CD8-positive, alpha-beta T cell (primary cell): ENCODE measurements at regions of chr7 and their contacts with region 1.

Region 1: DNA sequence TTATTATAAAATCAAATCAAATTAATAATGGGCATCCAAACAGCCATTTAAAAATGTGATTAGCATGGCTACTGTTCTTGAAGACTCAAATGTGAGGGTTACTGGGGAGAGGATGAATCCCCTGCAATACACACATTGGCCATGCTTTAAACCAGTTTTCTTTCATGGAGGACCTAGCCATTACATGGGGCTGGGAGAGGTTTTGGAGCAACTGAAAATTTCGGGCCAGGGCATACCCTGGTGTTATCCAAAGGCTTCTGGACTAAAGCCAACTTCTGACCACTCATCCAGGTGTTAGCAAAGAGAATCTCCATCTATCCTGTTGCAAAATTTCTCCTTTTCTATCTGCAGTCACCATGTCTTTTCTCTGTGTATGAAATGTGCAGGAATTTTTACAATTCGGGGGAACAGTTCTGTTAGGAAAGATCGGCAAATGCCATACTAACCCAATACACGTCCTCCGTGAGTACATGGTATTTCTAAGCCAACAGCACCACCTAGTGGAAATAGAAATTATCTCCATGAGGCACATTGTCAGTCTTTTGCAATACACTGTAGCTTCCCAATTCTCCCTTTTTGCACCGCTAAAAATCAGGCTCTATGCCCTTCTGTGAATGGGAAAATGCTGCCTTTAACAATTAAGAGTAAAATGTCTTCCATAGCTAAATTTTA is 47.0 kb upstream of the ZNF107 start:
- DNase-seq: peak in 3 of 9 experiments; percentile 23 to 70 (median 61)
- ATAC-seq: no peak
- H3K4me3 ChIP-seq: no peak overlapping the region
- H3K4me3 Mint-ChIP-seq: no peak overlapping the region
- H3K27ac ChIP-seq: no peak overlapping the region
- H3K27ac Mint-ChIP-seq: no peak overlapping the region
- H3K4me1 ChIP-seq: no peaks in the 10 kb centered on the region
- H3K4me1 Mint-ChIP-seq: peaks cover 2% of the 10 kb centered on the region
- H3K27me3 ChIP-seq: no peaks in the 10 kb centered on the region
- H3K27me3 Mint-ChIP-seq: no peaks in the 10 kb centered on the region
- CTCF ChIP-seq: peak; percentile 71

Region 2: GRCh38 chr7:63008366-63008765 is 1610.6 kb before region 1 on chr7:
- CTCF ChIA-PET with region 1: no interaction called
- POLR2A ChIA-PET with region 1: no interaction called
- intact Hi-C with region 1: loop called (anchors 5 kb)
- DNase-seq: no peak
- ATAC-seq: no peak
- H3K4me3 ChIP-seq: no peak overlapping the region
- H3K4me3 Mint-ChIP-seq: no peak overlapping the region
- H3K27ac ChIP-seq: no peak overlapping the region
- H3K27ac Mint-ChIP-seq: no peak overlapping the region
- H3K4me1 ChIP-seq: no peaks in the 10 kb centered on the region
- H3K4me1 Mint-ChIP-seq: no peaks in the 10 kb centered on the region
- H3K27me3 ChIP-seq: no peaks in the 10 kb centered on the region
- H3K27me3 Mint-ChIP-seq: no peaks in the 10 kb centered on the region
- CTCF ChIP-seq: no peak

Region 3: GRCh38 chr7:64183126-64183742 is 435.7 kb before region 1 on chr7:
- CTCF ChIA-PET with region 1: interaction called, 23 read pairs
- POLR2A ChIA-PET with region 1: no interaction called
- intact Hi-C with region 1: loop called in 1 of 2 experiments (anchors 2 kb)
- DNase-seq: peak in 7 of 9 experiments; percentile 11 to 62 (median 45)
- ATAC-seq: no peak
- H3K4me3 ChIP-seq: no peak overlapping the region
- H3K4me3 Mint-ChIP-seq: no peak overlapping the region
- H3K27ac ChIP-seq: no peak overlapping the region
- H3K27ac Mint-ChIP-seq: no peak overlapping the region
- H3K4me1 ChIP-seq: no peaks in the 10 kb centered on the region
- H3K4me1 Mint-ChIP-seq: no peaks in the 10 kb centered on the region
- H3K27me3 ChIP-seq: no peaks in the 10 kb centered on the region
- H3K27me3 Mint-ChIP-seq: no peaks in the 10 kb centered on the region
- CTCF ChIP-seq: peak; percentile 55

Region 4: GRCh38 chr7:64802699-64803098 is 183.8 kb after region 1 on chr7:
- CTCF ChIA-PET with region 1: no interaction called
- POLR2A ChIA-PET with region 1: no interaction called
- intact Hi-C with region 1: no loop called
- DNase-seq: no peak
- ATAC-seq: no peak
- H3K4me3 ChIP-seq: no peak overlapping the region
- H3K4me3 Mint-ChIP-seq: no peak overlapping the region
- H3K27ac ChIP-seq: no peak overlapping the region
- H3K27ac Mint-ChIP-seq: peak overlapping the region; percentile 7
- H3K4me1 ChIP-seq: no peaks in the 10 kb centered on the region
- H3K4me1 Mint-ChIP-seq: peaks cover 32% of the 10 kb centered on the region
- H3K27me3 ChIP-seq: no peaks in the 10 kb centered on the region
- H3K27me3 Mint-ChIP-seq: no peaks in the 10 kb centered on the region
- CTCF ChIP-seq: no peak